Uterus (tissue), 4 donors: ENCODE measurements at regions of chr16 and their contacts with region 1.

Region 1: DNA sequence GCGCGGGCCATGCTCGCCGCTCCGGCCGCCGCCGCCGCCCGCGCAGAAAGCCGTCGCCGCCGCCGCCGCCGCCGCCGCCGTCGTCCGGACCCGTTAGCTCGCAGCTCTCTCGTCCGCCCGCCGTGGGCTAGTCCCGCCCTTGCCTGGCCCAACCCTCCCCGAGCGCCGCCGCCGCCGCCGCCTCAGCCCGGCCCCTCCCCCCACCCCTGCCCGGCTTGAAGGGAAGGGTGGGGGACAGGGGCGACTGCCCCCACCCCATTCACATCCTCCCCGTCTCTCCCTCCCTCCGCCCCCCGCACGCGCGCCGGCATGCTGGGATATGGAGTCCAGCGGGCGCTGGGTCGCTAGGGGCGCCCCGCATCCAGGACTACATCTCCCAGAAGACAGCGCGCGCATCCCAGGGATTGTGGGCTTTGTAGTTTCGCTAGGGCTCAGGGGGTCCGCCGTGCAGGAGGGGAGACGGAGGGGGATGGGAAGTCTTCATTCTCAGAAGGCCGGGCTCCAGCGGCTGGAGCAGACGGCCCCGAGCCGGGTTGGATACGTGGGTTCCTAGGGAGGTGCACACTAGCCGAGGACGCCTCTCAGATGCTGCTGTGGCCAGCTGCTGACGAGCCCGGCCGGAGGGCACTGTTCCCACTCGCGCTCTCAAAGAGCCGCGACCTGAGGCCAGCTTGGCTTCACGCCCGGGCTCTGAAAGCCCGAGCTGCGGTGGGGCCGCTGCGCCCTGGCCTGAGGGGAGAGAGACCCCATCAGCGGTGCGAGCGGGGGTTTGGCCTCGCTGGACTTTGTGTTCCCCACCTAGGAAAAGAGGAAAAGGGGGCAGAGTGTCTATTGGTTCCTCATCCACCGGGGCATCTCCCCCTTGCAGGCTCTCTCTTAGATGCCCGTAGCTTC is at the start of gene ST3GAL2:
- DNase-seq: peak; percentile 95
- H3K4me3 ChIP-seq: peak within 1 kb of the TSS; percentile 65 to 92
- H3K27ac ChIP-seq: peak within 1 kb of the TSS; percentile 71 to 81
- H3K4me1 ChIP-seq: peaks cover 0 to 7% of the 10 kb centered on the region in 2 donors
- H3K27me3 ChIP-seq: no peaks in the 10 kb centered on the region
- CTCF ChIP-seq: peak in 2 of 4 experiments; percentile 8 to 39
- POLR2A ChIP-seq: peak in 1 of 2 donors; percentile 20
- total RNA-seq, gene ST3GAL2: 6.2 to 57.9 (median 27.5) TPM

Region 2: DNA sequence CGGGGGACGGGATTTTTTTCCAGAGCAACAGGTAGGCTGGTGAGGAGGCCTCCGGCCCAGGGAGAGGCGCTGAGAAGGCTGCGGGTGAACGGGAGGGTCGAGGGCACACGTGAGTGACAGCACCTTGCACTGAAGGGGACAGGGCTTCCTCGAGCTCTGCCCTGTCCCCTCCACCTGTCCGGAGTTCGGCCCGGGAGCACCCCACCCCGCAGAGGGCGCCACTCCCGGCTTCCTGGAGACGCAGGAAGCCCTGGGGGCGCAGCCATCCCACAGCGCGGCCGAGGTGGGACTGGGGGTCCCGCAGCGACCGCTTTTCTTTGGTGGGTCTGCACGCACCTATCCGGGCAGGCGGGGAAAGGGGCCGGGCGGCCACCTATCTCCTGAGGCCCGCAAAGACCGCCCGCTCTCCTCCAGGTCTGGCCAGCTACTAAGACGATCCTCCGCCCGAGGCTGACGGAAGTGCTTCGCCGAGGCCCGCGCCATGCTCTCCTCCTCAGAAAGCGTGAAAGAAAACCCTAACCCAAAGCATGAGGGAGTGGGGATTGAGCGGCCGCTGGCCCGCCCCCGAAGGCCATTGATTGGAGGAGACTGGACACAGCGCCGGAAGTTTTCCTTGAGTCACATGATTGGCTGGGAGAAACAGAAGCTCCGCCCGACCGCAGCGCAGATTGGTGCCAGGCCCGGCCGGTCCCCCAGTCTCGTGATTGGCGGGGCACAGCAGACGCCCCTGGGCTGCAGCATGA is 58.2 kb before region 1 on chr16:
- intact Hi-C with region 1: loop called (anchors 10 kb)
- DNase-seq: peak; percentile 93 to 96
- H3K4me3 ChIP-seq: peak overlapping the region; percentile 65 to 66
- H3K27ac ChIP-seq: peak overlapping the region; percentile 75 to 83
- H3K4me1 ChIP-seq: no peaks in the 10 kb centered on the region
- H3K27me3 ChIP-seq: no peaks in the 10 kb centered on the region
- CTCF ChIP-seq: peak; percentile 14 to 38 (median 26)
- POLR2A ChIP-seq: peak; percentile 48 to 60